CD4-positive, alpha-beta memory T cell (primary cell): ENCODE measurements at regions of chr11 and their contacts with region 1.

Region 1: GRCh38 chr11:33329705-33330329 is 72.6 kb downstream of the HIPK3 start:
- DNase-seq: peak; percentile 47 to 56 (median 49)
- H3K4me3 ChIP-seq: no peak overlapping the region
- H3K4me3 Mint-ChIP-seq: no peak overlapping the region
- H3K27ac ChIP-seq: no peak overlapping the region
- H3K27ac Mint-ChIP-seq: peak overlapping the region in 4 of 7 donors; percentile 31 to 73 (median 54)
- H3K4me1 ChIP-seq: peaks cover under 1% of the 10 kb centered on the region
- H3K4me1 Mint-ChIP-seq: peaks cover 17 to 33% (median 24%) of the 10 kb centered on the region in 4 donors
- H3K27me3 ChIP-seq: no peaks in the 10 kb centered on the region
- H3K27me3 Mint-ChIP-seq: no peaks in the 10 kb centered on the region

Region 2: DNA sequence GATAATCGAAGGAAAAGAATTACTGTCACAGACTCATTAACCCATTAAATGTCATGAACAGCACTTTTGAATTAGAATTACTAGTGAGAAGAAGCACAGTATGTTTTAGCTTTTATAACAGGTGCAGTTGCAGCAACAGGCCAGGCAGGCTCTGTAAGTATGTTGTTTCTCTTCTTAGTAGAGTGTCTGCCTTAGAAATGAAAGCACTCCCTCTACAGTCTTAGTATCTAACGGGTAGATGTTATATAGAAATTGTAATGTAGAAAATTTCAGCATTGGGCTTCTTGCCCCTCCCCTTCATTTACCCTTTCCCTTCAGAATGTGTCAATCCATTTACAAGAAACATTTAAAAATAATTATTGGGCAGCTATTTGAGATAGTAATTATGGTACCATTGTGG is 14.8 kb after region 1 on chr11:
- CTCF ChIA-PET with region 1: interaction called, 13 read pairs
- POLR2A ChIA-PET with region 1: no interaction called
- intact Hi-C with region 1: no loop called
- DNase-seq: no peak
- H3K4me3 ChIP-seq: no peak overlapping the region
- H3K4me3 Mint-ChIP-seq: no peak overlapping the region
- H3K27ac ChIP-seq: no peak overlapping the region
- H3K27ac Mint-ChIP-seq: no peak overlapping the region
- H3K4me1 ChIP-seq: no peaks in the 10 kb centered on the region
- H3K4me1 Mint-ChIP-seq: peaks cover 0 to 1% (median under 1%) of the 10 kb centered on the region in 4 donors
- H3K27me3 ChIP-seq: no peaks in the 10 kb centered on the region
- H3K27me3 Mint-ChIP-seq: no peaks in the 10 kb centered on the region

Region 3: DNA sequence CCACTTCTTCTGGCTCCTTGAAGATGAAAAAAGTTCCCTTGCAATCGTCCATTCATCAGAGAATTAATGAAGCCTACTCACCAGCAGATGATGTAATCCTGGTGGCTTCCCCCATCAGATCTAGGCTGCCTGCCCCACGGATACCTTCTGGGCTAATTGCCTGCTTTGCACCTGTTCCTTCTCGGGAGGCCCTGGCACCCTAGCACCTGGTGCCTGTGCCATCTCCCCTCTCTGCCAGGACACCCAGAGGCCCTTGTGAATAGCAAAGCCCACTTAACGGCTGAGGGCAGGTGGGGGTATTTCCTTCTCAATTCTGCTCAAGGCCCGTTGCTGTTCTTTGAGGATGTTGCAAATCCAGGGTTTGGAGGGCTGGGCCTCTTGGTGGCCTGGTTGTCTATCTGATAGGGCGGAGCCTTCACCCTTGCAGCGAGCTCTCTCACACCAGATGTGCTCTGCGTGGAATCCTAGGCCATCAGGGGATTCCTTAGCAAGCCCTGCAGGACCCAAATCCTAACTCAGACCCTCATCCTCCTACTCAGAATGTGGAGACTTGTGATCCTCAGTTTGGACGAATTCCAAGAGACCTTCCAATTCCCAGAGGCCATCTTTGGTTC is 562.0 kb after region 1 on chr11 and contains the start of gene LMO2:
- CTCF ChIA-PET with region 1: no interaction called
- POLR2A ChIA-PET with region 1: no interaction called
- intact Hi-C with region 1: no loop called
- DNase-seq: no peak
- H3K4me3 ChIP-seq: no peak within 1 kb of the TSS
- H3K4me3 Mint-ChIP-seq: peak within 1 kb of the TSS in 4 of 8 donors; percentile 81 to 92 (median 89)
- H3K27ac ChIP-seq: no peak within 1 kb of the TSS
- H3K27ac Mint-ChIP-seq: no peak within 1 kb of the TSS
- H3K4me1 ChIP-seq: peaks cover 25% of the 10 kb centered on the region
- H3K4me1 Mint-ChIP-seq: peaks cover 18 to 32% (median 25%) of the 10 kb centered on the region in 4 donors
- H3K27me3 ChIP-seq: no peaks in the 10 kb centered on the region
- H3K27me3 Mint-ChIP-seq: peaks cover 17 to 67% of the 10 kb centered on the region in 2 donors
- total RNA-seq, gene LMO2: 0.47 to 0.58 TPM